ENCODE measurements at regions of chr3 and their contacts with region 1.

Region 1: GRCh38 chr3:104503022-104503421 is 863.7 kb upstream of the ALCAM start:
- DNase-seq: no peak
- H3K4me3 ChIP-seq: no peak overlapping the region
- H3K27ac ChIP-seq: no peak overlapping the region
- H3K4me1 ChIP-seq: no peaks in the 10 kb centered on the region
- H3K27me3 ChIP-seq: no peaks in the 10 kb centered on the region
- CTCF ChIP-seq: no peak

Region 2: DNA sequence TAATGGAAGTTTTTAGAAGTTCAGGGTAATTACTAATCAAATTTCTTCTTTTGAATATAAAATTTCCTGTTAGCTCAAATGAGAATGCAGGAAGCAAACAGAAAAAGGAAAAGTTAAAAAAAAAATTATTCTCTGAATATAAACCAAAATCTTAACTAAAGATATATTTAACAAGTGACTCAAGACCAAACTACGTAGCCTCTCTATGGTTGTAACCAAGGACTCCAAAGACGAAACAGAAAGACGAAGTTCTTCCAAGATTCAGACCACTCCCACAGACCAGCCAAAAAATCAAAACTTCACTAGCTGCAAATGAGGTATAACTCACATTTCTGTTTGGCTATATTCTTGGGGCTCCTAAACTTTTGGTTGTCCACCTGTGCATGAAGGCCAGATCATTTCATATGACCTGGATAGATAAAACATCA is 17.2 kb after region 1 on chr3:
- intact Hi-C with region 1: loop called (anchors 1 kb)
- DNase-seq: no peak
- H3K4me3 ChIP-seq: peak overlapping the region in 1 of 2 donors; percentile 42
- H3K27ac ChIP-seq: peak overlapping the region; percentile 62 to 73
- H3K4me1 ChIP-seq: peaks cover 3 to 9% of the 10 kb centered on the region in 2 donors
- H3K27me3 ChIP-seq: no peaks in the 10 kb centered on the region
- CTCF ChIP-seq: no peak

Region 3: DNA sequence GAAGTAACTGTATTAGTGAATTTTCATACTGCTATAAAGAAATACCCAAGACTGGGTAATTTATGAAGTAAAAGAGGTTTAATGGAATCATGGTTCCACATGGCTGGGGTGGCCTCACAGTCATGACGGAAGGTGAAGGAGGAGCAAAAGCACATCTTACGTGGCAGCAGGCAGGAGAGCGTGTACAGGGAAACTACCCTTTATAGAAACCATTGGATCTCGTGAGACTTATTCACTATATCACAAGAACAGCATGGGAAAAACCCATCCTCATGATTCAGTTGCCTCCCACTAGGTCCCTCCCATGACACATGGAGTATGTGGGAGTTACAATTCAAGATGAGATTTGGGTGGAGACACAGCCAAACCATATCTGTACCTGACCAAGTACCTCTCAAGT is 51.4 kb after region 1 on chr3:
- intact Hi-C with region 1: loop called (anchors 5 kb)
- DNase-seq: no peak
- H3K4me3 ChIP-seq: no peak overlapping the region
- H3K27ac ChIP-seq: peak overlapping the region; percentile 30 to 32
- H3K4me1 ChIP-seq: peaks cover 0 to 10% of the 10 kb centered on the region in 2 donors
- H3K27me3 ChIP-seq: no peaks in the 10 kb centered on the region
- CTCF ChIP-seq: no peak

Measured in ascending aorta (tissue), 2 donors.